Activated B cell treated with CpG ODN at 0.5 μM for 24 hours (primary cell): ENCODE measurements at regions of chr4 and their contacts with region 1.

Region 1: DNA sequence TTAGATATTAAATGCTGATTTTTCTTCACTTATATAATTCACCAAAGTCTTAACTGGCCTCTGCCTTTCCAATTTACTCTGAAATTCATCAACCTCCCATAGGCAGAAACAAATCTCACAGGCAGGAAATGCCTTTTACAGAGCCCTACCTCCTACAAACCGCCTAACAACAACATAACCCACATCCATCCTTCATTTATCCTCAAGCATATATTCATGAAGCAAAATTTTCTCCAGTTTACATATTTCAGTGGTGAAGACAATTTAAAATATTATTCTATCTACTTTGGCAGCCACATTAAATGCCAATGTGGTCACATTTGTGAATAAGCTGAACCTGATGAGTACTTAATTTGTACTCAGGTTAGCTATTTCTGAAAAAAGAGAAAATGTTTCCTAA is 30.3 kb downstream of the SEPSECS start:
- DNase-seq: no peak
- ATAC-seq: no peak
- H3K4me3 Mint-ChIP-seq: no peak overlapping the region
- H3K27ac Mint-ChIP-seq: no peak overlapping the region
- H3K4me1 Mint-ChIP-seq: no peaks in the 10 kb centered on the region
- H3K27me3 Mint-ChIP-seq: no peaks in the 10 kb centered on the region
- CTCF ChIP-seq: no peak

Region 2: GRCh38 chr4:25154594-25155265 is 24.8 kb after region 1 on chr4:
- CTCF ChIA-PET with region 1: no interaction called
- POLR2A ChIA-PET with region 1: interaction called, 12 read pairs
- intact Hi-C with region 1: no loop called
- DNase-seq: no peak
- ATAC-seq: no peak
- H3K4me3 Mint-ChIP-seq: no peak overlapping the region
- H3K27ac Mint-ChIP-seq: no peak overlapping the region
- H3K4me1 Mint-ChIP-seq: peaks cover 10% of the 10 kb centered on the region
- H3K27me3 Mint-ChIP-seq: no peaks in the 10 kb centered on the region
- CTCF ChIP-seq: no peak